CD8-positive, alpha-beta T cell (primary cell): ENCODE measurements at regions of chr11 and their contacts with region 1.

Region 1: DNA sequence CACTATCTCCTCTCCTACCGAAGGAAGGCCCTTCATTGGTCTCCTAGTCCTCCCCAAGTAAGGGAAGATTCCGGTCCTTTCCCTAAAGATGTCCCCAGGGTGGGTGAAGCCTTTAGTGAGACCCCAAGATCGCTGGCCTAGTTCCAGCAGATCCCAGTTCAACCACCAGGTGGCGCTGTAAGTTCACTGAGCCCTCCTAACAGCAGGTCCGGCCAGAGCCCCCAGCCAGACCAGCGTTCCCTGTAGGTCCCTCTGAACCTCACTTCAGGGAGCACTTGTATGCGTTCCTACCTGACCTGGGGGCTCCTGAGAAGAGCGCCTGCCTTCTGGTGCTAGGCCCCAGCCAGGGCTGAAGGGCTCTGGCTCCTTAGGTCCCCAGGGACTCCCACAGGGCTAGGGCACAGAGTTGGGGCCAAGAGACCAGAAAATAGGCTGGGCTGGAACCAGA is 38.1 kb downstream of the LMO1 start:
- DNase-seq: peak; percentile 28 to 77 (median 66)
- ATAC-seq: peak; percentile 44
- H3K4me3 ChIP-seq: no peak overlapping the region
- H3K4me3 Mint-ChIP-seq: no peak overlapping the region
- H3K27ac ChIP-seq: no peak overlapping the region
- H3K27ac Mint-ChIP-seq: no peak overlapping the region
- H3K4me1 ChIP-seq: no peaks in the 10 kb centered on the region
- H3K4me1 Mint-ChIP-seq: peaks cover 2% of the 10 kb centered on the region
- H3K27me3 ChIP-seq: no peaks in the 10 kb centered on the region
- H3K27me3 Mint-ChIP-seq: peaks cover 5% of the 10 kb centered on the region
- CTCF ChIP-seq: peak; percentile 76

Region 2: GRCh38 chr11:8263769-8264410 is 38.3 kb after region 1 on chr11 and contains the start of gene LMO1:
- CTCF ChIA-PET with region 1: interaction called, 5 read pairs
- POLR2A ChIA-PET with region 1: no interaction called
- intact Hi-C with region 1: loop called (anchors 1 kb)
- DNase-seq: peak; percentile 31 to 77 (median 68)
- ATAC-seq: peak; percentile 76
- H3K4me3 ChIP-seq: peak within 1 kb of the TSS in 1 of 2 experiments; percentile 55
- H3K4me3 Mint-ChIP-seq: peak within 1 kb of the TSS; percentile 63
- H3K27ac ChIP-seq: no peak within 1 kb of the TSS
- H3K27ac Mint-ChIP-seq: no peak within 1 kb of the TSS
- H3K4me1 ChIP-seq: peaks cover 11% of the 10 kb centered on the region
- H3K4me1 Mint-ChIP-seq: peaks cover 18% of the 10 kb centered on the region
- H3K27me3 ChIP-seq: peaks cover 0 to 13% of the 10 kb centered on the region in 2 experiments
- H3K27me3 Mint-ChIP-seq: peaks cover 58% of the 10 kb centered on the region
- CTCF ChIP-seq: peak; percentile 64
- total RNA-seq, gene LMO1: not detected

Region 3: DNA sequence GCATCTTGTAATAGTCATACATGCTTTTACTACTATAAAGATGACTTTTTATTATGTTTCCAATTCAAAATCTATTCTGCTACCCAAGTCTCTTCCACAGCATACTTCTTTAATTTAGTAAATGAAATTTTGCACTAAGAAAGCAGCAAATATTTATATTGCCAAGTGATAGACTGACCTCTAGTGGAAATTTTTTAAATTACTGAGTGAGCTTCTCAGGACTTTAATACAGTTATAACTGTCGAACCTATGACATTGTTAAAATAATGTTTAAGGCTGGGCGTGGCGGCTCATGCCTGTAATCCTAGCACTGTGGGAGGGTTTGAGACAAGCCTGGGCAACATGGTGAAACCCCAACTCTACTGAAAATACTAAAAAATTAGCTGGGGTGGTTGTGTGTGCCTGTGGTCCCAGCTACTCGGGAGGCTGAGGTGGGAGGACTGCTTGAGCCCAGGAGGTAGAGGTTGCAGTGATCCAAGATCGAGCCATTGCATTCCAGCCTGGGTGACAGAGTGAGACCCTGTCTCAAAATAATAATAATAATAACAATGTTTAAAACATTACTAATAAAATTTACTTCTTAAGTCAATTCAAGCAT is 341.1 kb after region 1 on chr11:
- CTCF ChIA-PET with region 1: interaction called, 6 read pairs
- POLR2A ChIA-PET with region 1: no interaction called
- intact Hi-C with region 1: loop called in 1 of 2 experiments (anchors 1 kb)
- DNase-seq: peak in 2 of 9 experiments; percentile 31 to 47
- ATAC-seq: no peak
- H3K4me3 ChIP-seq: no peak overlapping the region
- H3K4me3 Mint-ChIP-seq: no peak overlapping the region
- H3K27ac ChIP-seq: no peak overlapping the region
- H3K27ac Mint-ChIP-seq: no peak overlapping the region
- H3K4me1 ChIP-seq: no peaks in the 10 kb centered on the region
- H3K4me1 Mint-ChIP-seq: no peaks in the 10 kb centered on the region
- H3K27me3 ChIP-seq: peaks cover 0 to 3% of the 10 kb centered on the region in 2 experiments
- H3K27me3 Mint-ChIP-seq: peaks cover 17% of the 10 kb centered on the region
- CTCF ChIP-seq: peak; percentile 79